ENCODE measurements at regions of chr2 and their contacts with region 1.

Region 1: GRCh38 chr2:636641-637405 is 40.4 kb downstream of the TMEM18 start:
- DNase-seq: peak; percentile 67 to 71
- H3K4me3 ChIP-seq: no peak overlapping the region
- H3K4me3 Mint-ChIP-seq: no peak overlapping the region
- H3K27ac Mint-ChIP-seq: no peak overlapping the region
- H3K4me1 ChIP-seq: peaks cover 8% of the 10 kb centered on the region; the same call in 1 of the 2 replicates
- H3K4me1 Mint-ChIP-seq: no peaks in the 10 kb centered on the region
- H3K27me3 ChIP-seq: no peaks in the 10 kb centered on the region
- H3K27me3 Mint-ChIP-seq: peaks cover 6% of the 10 kb centered on the region
- CTCF ChIP-seq: peak; percentile 77 to 80

Region 2: DNA sequence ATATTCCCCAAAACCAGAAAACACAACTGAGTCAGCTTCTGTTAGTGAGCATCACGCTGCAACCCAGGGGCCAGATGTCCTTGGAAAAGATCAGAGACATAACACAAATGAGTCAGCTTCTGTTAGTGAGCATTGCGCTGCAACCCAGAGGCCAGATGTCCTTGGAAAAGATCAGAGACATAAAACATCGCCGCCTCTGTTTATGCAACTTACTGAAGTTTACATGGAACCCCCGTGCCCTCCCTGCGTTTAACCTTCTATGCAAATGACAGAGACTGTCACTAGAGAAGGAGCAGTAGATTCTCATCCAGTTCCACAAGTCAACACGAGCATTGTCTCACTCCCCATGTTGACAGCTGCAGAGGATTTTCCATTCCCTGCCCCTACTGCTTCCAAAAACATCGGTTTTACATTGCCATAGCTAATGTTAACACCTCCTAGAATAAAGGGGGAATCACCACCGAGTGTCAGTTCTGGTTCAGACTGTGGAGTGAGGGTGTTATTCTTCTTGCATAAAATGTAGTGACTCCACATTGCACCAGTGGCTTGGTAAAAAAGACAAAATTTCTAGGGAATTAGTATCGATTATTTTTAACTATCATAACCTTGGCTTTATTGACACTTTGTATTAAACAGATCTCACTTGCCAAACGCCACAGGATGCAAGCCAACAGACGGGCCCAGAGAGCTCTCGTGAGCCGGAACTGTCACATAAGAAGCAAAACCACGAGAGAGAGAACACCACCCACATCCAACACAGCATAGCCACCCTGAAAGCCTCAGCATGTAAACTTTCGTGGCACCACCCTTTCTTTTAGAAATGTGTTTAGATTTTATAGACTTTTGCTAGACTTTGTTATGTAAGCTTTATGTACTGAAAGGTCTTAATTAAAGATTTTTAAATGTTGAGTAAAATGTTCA is 460.7 kb before region 1 on chr2:
- CTCF ChIA-PET with region 1: no interaction called
- POLR2A ChIA-PET with region 1: no interaction called
- intact Hi-C with region 1: loop called (anchors 1 kb)
- DNase-seq: no peak
- H3K4me3 ChIP-seq: no peak overlapping the region
- H3K4me3 Mint-ChIP-seq: no peak overlapping the region
- H3K27ac Mint-ChIP-seq: no peak overlapping the region
- H3K4me1 ChIP-seq: no peaks in the 10 kb centered on the region
- H3K4me1 Mint-ChIP-seq: no peaks in the 10 kb centered on the region
- H3K27me3 ChIP-seq: no peaks in the 10 kb centered on the region
- H3K27me3 Mint-ChIP-seq: peaks cover 3% of the 10 kb centered on the region
- CTCF ChIP-seq: no peak

Region 3: GRCh38 chr2:246489-247144 is 390.2 kb before region 1 on chr2:
- CTCF ChIA-PET with region 1: interaction called, 3 read pairs
- POLR2A ChIA-PET with region 1: no interaction called
- intact Hi-C with region 1: loop called (anchors 1 kb)
- DNase-seq: peak in 1 of 2 experiments; percentile 70
- H3K4me3 ChIP-seq: no peak overlapping the region
- H3K4me3 Mint-ChIP-seq: no peak overlapping the region
- H3K27ac Mint-ChIP-seq: no peak overlapping the region
- H3K4me1 ChIP-seq: no peaks in the 10 kb centered on the region
- H3K4me1 Mint-ChIP-seq: no peaks in the 10 kb centered on the region
- H3K27me3 ChIP-seq: no peaks in the 10 kb centered on the region
- H3K27me3 Mint-ChIP-seq: no peaks in the 10 kb centered on the region
- CTCF ChIP-seq: peak; percentile 61 to 69

Region 4: DNA sequence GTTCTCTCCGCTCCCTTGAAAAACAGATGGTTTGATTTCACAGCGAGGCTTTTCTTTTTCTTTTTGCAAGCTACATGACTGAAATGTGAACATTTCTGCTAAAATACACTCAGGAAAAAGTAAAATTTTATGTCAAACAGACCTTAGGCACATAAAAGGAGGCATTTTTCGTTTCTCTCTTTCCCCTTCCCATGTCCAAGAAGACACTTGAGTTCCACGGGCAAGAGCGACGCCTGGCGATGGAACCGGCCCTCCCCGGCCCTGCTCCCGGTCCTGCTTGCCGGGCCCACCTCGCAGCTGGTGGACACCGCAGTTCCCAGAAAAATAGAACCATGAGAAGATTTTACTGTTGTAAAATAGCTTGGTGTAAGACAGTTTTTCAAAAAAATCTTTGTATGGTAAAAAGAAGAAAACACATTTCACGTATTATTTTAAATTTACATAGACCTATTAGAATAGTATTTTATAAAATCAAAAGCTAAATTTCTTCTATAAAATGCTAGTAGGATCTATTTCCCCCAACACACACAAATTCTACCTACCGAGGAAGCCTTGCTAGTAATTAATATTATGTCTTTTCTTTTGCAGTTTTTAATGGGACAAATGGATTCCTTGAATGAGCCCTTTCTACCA is 346.6 kb before region 1 on chr2:
- CTCF ChIA-PET with region 1: no interaction called
- POLR2A ChIA-PET with region 1: no interaction called
- intact Hi-C with region 1: loop called (anchors 1 kb)
- DNase-seq: peak; percentile 79 to 84
- H3K4me3 ChIP-seq: peak overlapping the region; percentile 41
- H3K4me3 Mint-ChIP-seq: peak overlapping the region; percentile 67
- H3K27ac Mint-ChIP-seq: no peak overlapping the region
- H3K4me1 ChIP-seq: peaks cover 4% of the 10 kb centered on the region; the same call in 1 of the 2 replicates
- H3K4me1 Mint-ChIP-seq: no peaks in the 10 kb centered on the region
- H3K27me3 ChIP-seq: no peaks in the 10 kb centered on the region; the same call in none of the 2 replicates
- H3K27me3 Mint-ChIP-seq: peaks cover 12% of the 10 kb centered on the region
- CTCF ChIP-seq: peak; percentile 85 to 96

Region 5: GRCh38 chr2:529425-529824 is 107.4 kb before region 1 on chr2:
- CTCF ChIA-PET with region 1: no interaction called
- POLR2A ChIA-PET with region 1: no interaction called
- intact Hi-C with region 1: loop called (anchors 1 kb)
- DNase-seq: no peak
- H3K4me3 ChIP-seq: no peak overlapping the region
- H3K4me3 Mint-ChIP-seq: no peak overlapping the region
- H3K27ac Mint-ChIP-seq: no peak overlapping the region
- H3K4me1 ChIP-seq: no peaks in the 10 kb centered on the region
- H3K4me1 Mint-ChIP-seq: no peaks in the 10 kb centered on the region
- H3K27me3 ChIP-seq: no peaks in the 10 kb centered on the region
- H3K27me3 Mint-ChIP-seq: no peaks in the 10 kb centered on the region
- CTCF ChIP-seq: peak in 1 of 2 experiments; percentile 14

Measured in Caco-2 (cell line).